ENCODE measurements at regions of chr17 and their contacts with region 1.

Region 1: GRCh38 chr17:10807704-10808128 is 3.8 kb upstream of the TMEM238L start:
- DNase-seq: no peak
- H3K4me3 Mint-ChIP-seq: no peak overlapping the region
- H3K27ac Mint-ChIP-seq: no peak overlapping the region
- H3K4me1 Mint-ChIP-seq: no peaks in the 10 kb centered on the region
- H3K27me3 Mint-ChIP-seq: no peaks in the 10 kb centered on the region

Region 2: GRCh38 chr17:10513299-10514067 is 294.2 kb before region 1 on chr17:
- intact Hi-C with region 1: no loop called
- DNase-seq: no peak
- H3K4me3 Mint-ChIP-seq: no peak overlapping the region
- H3K27ac Mint-ChIP-seq: no peak overlapping the region
- H3K4me1 Mint-ChIP-seq: no peaks in the 10 kb centered on the region
- H3K27me3 Mint-ChIP-seq: no peaks in the 10 kb centered on the region

Region 3: DNA sequence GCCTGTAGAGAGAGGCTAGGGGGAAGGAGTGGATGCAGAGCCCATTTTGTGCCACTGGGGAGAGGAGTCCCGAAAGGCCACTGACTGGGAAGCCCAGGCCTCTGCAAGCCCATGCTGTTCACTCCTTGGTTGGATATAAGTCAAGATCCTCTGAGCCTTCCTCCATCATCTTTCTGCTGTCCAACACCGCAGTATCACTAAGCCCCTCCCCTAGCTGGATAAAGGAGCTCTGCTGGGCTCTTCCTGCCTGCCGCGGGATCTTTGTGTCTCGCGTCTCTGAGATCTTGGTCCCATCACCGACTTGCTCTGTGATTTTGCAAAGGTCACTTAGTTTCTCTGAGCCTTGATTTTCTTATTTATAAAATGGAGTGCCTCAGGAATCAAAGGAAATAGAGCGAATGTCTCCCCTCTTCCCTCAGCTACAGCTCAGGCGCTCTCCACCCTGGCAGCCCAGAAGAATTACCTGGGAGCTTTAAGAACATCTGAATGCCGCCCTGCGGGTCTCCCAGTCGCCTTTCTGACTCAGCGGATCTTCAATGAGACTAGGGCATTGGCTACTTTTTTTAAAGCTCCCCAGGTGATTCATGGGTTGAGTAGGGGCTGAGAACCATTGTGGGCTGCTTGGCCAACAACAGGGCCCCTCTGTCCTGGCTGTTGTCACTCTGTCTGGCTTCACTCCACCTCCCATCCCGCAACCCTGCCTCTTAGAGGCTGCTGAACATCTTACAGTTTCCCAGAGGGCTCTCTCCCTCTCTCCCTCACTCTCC is 52.7 kb before region 1 on chr17:
- intact Hi-C with region 1: loop called (anchors 5 kb)
- DNase-seq: no peak
- H3K4me3 Mint-ChIP-seq: no peak overlapping the region
- H3K27ac Mint-ChIP-seq: no peak overlapping the region
- H3K4me1 Mint-ChIP-seq: no peaks in the 10 kb centered on the region
- H3K27me3 Mint-ChIP-seq: peaks cover 2% of the 10 kb centered on the region

Measured in activated T-helper 1 cell treated with anti-CD3 and anti-CD28 coated beads, Interleukin-12 subunit alpha, Interleukin-12 subunit beta, Interleukin-2, Interleukin-4 antibody, amounts not matched to agents 30 ng/mL and 10 ng/mL and 1 ng/mL, durations not matched to agents 14 hours and 24 hours and 36 hours (primary cell).